WTC11 (cell line): ENCODE measurements at regions of chr11 and their contacts with region 1.

Region 1: GRCh38 chr11:131246663-131247062 is 123.8 kb upstream of the NTM start:
- DNase-seq: peak; percentile 82
- ATAC-seq: peak; percentile 91
- H3K4me3 Mint-ChIP-seq: peak overlapping the region; percentile 53
- H3K27ac Mint-ChIP-seq: no peak overlapping the region
- H3K4me1 Mint-ChIP-seq: peaks cover 48% of the 10 kb centered on the region
- H3K27me3 Mint-ChIP-seq: peaks cover 12% of the 10 kb centered on the region
- CTCF ChIP-seq: peak; percentile 73

Region 2: GRCh38 chr11:131201674-131202073 is 45.0 kb before region 1 on chr11:
- CTCF ChIA-PET with region 1: no interaction called
- POLR2A ChIA-PET with region 1: no interaction called
- DNase-seq: no peak
- ATAC-seq: no peak
- H3K4me3 Mint-ChIP-seq: no peak overlapping the region
- H3K27ac Mint-ChIP-seq: no peak overlapping the region
- H3K4me1 Mint-ChIP-seq: peaks cover 15% of the 10 kb centered on the region
- H3K27me3 Mint-ChIP-seq: peaks cover 4% of the 10 kb centered on the region
- CTCF ChIP-seq: no peak

Region 3: DNA sequence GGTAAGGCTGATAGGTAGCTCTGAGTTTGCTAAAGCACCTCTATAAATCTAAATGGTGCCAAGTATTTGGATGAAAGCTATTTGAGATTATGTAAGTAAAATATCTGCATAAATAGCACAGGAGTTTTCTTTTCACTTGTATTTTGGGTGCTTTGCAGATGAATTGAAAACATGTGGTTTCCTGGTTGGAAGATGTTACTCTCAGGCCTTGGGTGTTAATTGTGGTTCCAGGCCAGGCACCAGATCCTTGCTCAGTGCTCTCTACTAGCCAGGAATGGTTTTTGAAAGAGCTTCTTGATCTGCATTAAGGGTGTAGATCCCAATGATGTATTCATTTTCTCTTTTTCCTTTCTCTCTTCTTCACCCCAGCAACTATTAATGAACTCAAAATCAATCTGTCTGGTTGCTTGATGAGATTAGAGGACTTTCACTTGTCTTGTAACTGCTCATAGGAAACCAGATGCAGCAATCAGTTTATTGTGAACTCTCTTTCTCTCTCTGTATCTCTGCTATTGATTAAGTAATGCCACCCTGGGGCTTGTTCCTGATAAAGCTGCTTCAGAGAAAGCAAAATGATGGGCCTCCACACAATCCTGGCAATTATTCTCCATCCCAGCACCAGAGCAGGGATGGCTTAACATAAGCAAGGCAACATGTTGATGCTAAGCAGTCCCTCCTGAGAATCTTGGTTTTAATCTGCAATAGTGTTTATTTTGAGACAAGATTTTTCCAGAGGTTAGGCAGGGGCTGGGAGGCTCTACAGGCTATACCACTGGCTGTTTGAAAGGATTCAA is 23.3 kb before region 1 on chr11:
- CTCF ChIA-PET with region 1: interaction called, 13 read pairs
- POLR2A ChIA-PET with region 1: no interaction called
- DNase-seq: no peak
- ATAC-seq: peak; percentile 79
- H3K4me3 Mint-ChIP-seq: no peak overlapping the region
- H3K27ac Mint-ChIP-seq: peak overlapping the region; percentile 69
- H3K4me1 Mint-ChIP-seq: peaks cover 54% of the 10 kb centered on the region
- H3K27me3 Mint-ChIP-seq: no peaks in the 10 kb centered on the region; the same call in 1 of the 2 replicates
- CTCF ChIP-seq: no peak

Region 4: DNA sequence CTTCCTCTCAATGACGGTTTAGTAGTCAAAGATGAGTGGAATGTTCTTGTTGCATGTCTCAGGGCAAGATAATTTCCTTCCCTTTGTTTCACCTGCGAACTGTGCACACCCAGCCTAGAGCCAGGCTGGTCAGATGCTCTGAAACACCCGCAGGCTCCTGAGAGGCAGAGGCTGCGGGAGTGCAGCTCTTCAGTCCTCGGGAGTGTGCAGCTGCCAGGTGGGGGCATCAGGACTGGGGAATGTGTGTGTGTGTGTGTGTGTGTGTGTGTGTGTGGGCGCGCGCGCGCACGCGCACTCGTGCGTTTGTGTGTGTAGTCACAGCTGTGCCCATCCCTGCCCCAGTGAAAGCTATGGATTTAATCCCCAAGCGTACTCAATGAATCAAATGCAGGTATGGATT is 12.4 kb before region 1 on chr11:
- CTCF ChIA-PET with region 1: interaction called, 12 read pairs
- POLR2A ChIA-PET with region 1: no interaction called
- DNase-seq: no peak
- ATAC-seq: 0 out of 2 replicates have a peak, but pooled peaks have one; percentile 9
- H3K4me3 Mint-ChIP-seq: no peak overlapping the region
- H3K27ac Mint-ChIP-seq: no peak overlapping the region
- H3K4me1 Mint-ChIP-seq: peaks cover 27% of the 10 kb centered on the region
- H3K27me3 Mint-ChIP-seq: no peaks in the 10 kb centered on the region; the same call in 1 of the 2 replicates
- CTCF ChIP-seq: no peak

Region 5: DNA sequence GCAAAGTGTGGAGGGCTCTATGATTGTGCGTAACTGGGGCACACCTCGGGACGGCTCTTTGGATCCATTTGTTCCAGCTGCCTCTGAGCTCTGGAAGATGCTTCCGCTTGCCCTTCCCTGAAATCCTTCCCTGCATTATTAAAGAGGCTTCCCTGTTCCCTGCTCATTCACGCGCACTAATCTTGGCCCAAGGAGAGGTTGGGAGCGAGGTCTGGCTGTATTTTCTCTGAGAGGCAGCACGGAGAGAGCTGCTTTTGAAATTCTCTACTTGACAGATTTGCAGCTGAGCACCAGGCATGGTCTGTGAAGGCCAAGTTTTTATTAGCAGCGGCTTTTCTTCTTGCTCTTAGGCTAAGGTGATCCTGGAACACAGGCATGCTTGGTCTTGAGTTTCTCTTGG is 28.9 kb after region 1 on chr11:
- CTCF ChIA-PET with region 1: interaction called, 11 read pairs
- POLR2A ChIA-PET with region 1: no interaction called
- DNase-seq: no peak
- ATAC-seq: peak; percentile 48
- H3K4me3 Mint-ChIP-seq: no peak overlapping the region
- H3K27ac Mint-ChIP-seq: peak overlapping the region; percentile 77
- H3K4me1 Mint-ChIP-seq: peaks cover 60% of the 10 kb centered on the region
- H3K27me3 Mint-ChIP-seq: no peaks in the 10 kb centered on the region
- CTCF ChIP-seq: no peak